Endothelial cell of umbilical vein (primary cell): ENCODE measurements at regions of chr6 and their contacts with region 1.

Region 1: DNA sequence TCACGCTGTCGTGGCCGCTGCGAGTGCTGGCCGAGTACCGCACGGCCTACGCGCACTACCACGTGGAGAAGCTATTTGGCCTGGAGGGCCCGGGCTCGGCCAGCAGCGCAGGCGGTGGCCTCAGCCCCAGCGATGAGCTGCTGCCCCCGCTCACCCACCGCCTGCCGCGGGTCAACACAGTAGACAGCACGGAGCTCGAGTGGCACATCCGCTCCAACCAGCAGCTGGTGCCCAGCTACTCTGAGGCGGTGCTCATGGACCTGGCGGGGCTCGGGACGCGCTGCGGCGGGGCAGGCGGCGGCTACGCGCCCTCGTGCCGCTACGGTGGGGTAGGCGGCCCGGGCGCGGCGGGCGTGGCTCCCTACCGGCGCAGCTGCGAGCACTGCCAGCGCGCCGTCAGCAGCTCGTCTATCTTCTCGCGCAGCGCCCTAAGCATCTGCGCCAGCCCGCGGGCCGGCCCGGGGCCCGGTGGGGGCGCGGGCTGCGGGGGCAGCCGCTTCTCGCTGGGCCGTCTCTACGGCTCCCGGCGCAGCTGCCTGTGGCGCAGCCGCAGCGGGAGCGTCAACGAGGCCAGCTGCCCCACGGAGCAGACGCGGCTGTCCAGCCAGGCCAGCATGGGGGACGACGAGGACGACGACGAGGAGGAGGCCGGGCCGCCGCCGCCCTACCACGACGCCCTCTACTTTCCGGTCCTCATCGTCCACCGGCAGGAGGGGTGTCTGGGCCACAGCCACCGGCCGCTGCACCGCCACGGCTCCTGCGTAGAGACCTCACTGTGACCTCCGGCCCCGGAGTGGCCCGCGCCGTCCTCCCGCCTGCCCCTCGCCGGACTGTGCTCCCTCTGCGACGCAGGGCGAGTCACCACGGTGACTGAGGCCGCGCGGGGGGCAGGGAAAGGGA is 5.7 kb downstream of the TMEM151B start:
- DNase-seq: no peak
- H3K4me3 ChIP-seq: no peak overlapping the region
- H3K27ac ChIP-seq: no peak overlapping the region
- H3K4me1 ChIP-seq: no peaks in the 10 kb centered on the region
- H3K27me3 ChIP-seq: peaks cover 28 to 42% of the 10 kb centered on the region in 2 experiments
- CTCF ChIP-seq: no peak
- POLR2A ChIP-seq: no peak

Region 2: DNA sequence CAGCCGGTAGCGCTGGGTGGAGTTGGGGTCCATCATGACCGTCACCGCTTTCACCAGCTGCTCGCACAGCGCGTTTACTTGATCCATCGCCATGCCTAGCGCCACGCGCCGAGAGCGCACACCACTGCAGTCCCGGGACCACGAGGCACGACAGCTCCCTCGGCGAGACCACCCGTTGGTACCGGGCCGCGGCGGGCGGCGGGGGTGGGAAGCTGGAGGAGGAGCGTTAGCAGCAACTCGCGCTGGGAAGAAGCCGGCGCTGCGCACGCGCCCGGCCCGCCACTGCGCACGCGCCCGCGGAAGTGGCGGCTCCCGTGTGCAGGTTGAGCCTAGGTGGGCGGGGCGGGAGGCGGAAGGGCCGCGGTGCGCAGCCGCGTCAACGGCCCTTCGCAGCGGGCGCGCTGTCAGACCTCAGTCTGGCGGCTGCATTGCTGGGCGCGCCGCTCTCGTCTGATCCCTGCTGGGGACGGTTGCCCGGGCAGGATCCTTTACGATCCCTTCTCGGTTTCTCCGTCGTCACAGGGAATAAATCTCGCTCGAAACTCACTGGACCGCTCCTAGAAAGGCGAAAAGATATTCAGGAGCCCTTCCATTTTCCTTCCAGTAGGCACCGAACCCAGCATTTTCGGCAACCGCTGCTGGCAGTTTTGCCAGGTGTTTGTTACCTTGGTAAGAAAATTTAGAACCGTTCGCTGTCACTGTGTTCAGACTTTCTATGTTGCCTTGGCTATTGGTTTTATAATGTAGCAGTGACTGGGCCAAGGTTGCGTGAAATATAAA is 700.0 kb before region 1 on chr6 and contains the starts of genes POLH and XPO5:
- CTCF ChIA-PET with region 1: no interaction called
- POLR2A ChIA-PET with region 1: no interaction called
- dilution Hi-C with region 1: no loop called
- intact Hi-C with region 1: no loop called
- DNase-seq: peak; percentile 96
- H3K4me3 ChIP-seq: peak within 1 kb of the TSS; percentile 76 to 89 (median 85)
- H3K27ac ChIP-seq: peak within 1 kb of the TSS; percentile 21
- H3K4me1 ChIP-seq: peaks cover 24% of the 10 kb centered on the region
- H3K27me3 ChIP-seq: no peaks in the 10 kb centered on the region
- CTCF ChIP-seq: no peak
- POLR2A ChIP-seq: peak; percentile 100
- total RNA-seq, gene POLH: 33.7 and 36.6 TPM in 2 replicates
- total RNA-seq, gene XPO5: 45.9 and 50.0 TPM in 2 replicates

Region 3: GRCh38 chr6:44304282-44305199 is 28.5 kb after region 1 on chr6:
- CTCF ChIA-PET with region 1: interaction called, 83 read pairs
- POLR2A ChIA-PET with region 1: no interaction called
- dilution Hi-C with region 1: no loop called
- intact Hi-C with region 1: no loop called
- DNase-seq: peak; percentile 41
- H3K4me3 ChIP-seq: no peak overlapping the region
- H3K27ac ChIP-seq: no peak overlapping the region
- H3K4me1 ChIP-seq: no peaks in the 10 kb centered on the region
- H3K27me3 ChIP-seq: no peaks in the 10 kb centered on the region
- CTCF ChIP-seq: peak; percentile 80 to 84
- POLR2A ChIP-seq: no peak

Region 4: GRCh38 chr6:44397424-44398164 is 121.6 kb after region 1 on chr6:
- CTCF ChIA-PET with region 1: no interaction called
- POLR2A ChIA-PET with region 1: no interaction called
- dilution Hi-C with region 1: no loop called
- intact Hi-C with region 1: no loop called
- DNase-seq: no peak
- H3K4me3 ChIP-seq: no peak overlapping the region
- H3K27ac ChIP-seq: no peak overlapping the region
- H3K4me1 ChIP-seq: peaks cover 7% of the 10 kb centered on the region
- H3K27me3 ChIP-seq: no peaks in the 10 kb centered on the region
- CTCF ChIP-seq: no peak
- POLR2A ChIP-seq: no peak